Activated naive CD4-positive, alpha-beta T cell treated with anti-CD3 and anti-CD28 coated beads for 36 hours (primary cell): ENCODE measurements at regions of chr3 and their contacts with region 1.

Region 1: GRCh38 chr3:13884851-13885703 is 5.2 kb upstream of the WNT7A start:
- DNase-seq: peak; percentile 84
- H3K4me3 Mint-ChIP-seq: no peak overlapping the region
- H3K27ac Mint-ChIP-seq: no peak overlapping the region
- H3K4me1 Mint-ChIP-seq: no peaks in the 10 kb centered on the region
- H3K27me3 Mint-ChIP-seq: peaks cover 7% of the 10 kb centered on the region

Region 2: DNA sequence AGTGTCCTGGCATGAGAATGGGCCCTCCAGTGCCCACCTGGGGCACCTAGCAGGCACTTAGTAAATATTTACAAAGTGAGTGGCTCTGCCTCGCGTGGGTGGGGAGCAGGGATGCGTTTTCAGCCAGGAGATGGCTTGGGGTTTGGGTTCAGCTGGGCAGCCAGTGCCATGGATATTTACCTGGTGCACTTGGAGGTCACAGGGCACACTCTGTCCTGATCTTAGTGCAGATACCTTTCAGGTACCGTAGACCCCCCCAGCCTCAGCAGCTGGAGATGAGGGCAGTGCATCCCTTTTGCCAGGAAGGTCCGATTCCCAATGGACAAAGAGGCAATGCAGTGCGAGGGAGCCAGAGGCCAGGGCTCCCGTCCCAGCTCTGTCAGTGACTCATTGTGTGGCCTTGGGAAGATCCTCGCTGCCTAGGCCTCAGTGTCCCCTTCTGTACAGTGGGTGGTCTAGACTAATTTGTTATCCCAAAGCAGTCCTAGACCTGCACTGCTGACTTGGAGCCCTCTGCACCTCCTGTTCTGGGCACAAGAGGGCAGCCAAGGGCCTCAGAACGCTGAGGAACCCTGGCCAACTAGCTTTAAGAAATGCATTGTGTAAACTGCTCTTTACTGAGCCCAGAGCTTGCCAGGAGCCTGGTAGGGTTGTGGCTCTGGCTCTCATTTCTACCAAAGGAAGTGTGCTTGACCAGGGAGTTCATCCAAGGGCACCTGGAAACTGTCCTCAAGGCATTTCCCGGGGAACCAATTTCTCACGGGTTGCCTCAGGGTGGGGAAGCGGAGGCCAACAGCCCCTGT is 389.0 kb before region 1 on chr3:
- CTCF ChIA-PET with region 1: interaction called, 6 read pairs
- intact Hi-C with region 1: loop called (anchors 2 kb)
- DNase-seq: peak; percentile 83
- H3K4me3 Mint-ChIP-seq: no peak overlapping the region
- H3K27ac Mint-ChIP-seq: no peak overlapping the region
- H3K4me1 Mint-ChIP-seq: no peaks in the 10 kb centered on the region
- H3K27me3 Mint-ChIP-seq: no peaks in the 10 kb centered on the region

Region 3: GRCh38 chr3:13869761-13870343 is 15.2 kb before region 1 on chr3:
- CTCF ChIA-PET with region 1: interaction called, 10 read pairs
- intact Hi-C with region 1: no loop called
- DNase-seq: no peak
- H3K4me3 Mint-ChIP-seq: no peak overlapping the region
- H3K27ac Mint-ChIP-seq: no peak overlapping the region
- H3K4me1 Mint-ChIP-seq: peaks cover 47% of the 10 kb centered on the region
- H3K27me3 Mint-ChIP-seq: no peaks in the 10 kb centered on the region